K562 (cell line): ENCODE measurements at regions of chr10 and their contacts with region 1.

Region 1: GRCh38 chr10:14507176-14507575 is 176.5 kb upstream of the FRMD4A start:
- DNase-seq: no peak
- ATAC-seq: no peak
- H3K4me3 ChIP-seq: no peak overlapping the region
- H3K27ac ChIP-seq: no peak overlapping the region
- H3K4me1 ChIP-seq: no peaks in the 10 kb centered on the region
- H3K27me3 ChIP-seq: peaks cover 2 to 15% of the 10 kb centered on the region in 2 experiments; a peak in 2 of 5 replicates
- CTCF ChIP-seq: no peak
- EP300 ChIP-seq: no peak
- POLR2A ChIP-seq: no peak
- RAD21 ChIP-seq: no peak

Region 2: GRCh38 chr10:14959276-14960057 is 452.3 kb after region 1 on chr10 and contains the start of gene MEIG1:
- CTCF ChIA-PET with region 1: no interaction called
- POLR2A ChIA-PET with region 1: no interaction called
- in situ Hi-C with region 1: loop called (anchors 10 kb)
- intact Hi-C with region 1: no loop called
- DNase-seq: peak; percentile 91 to 98 (median 98)
- ATAC-seq: peak; percentile 97
- H3K4me3 ChIP-seq: peak within 1 kb of the TSS; percentile 77
- H3K27ac ChIP-seq: peak within 1 kb of the TSS; percentile 84
- H3K4me1 ChIP-seq: peaks cover 8 to 15% of the 10 kb centered on the region in 2 experiments
- H3K27me3 ChIP-seq: no peaks in the 10 kb centered on the region
- CTCF ChIP-seq: no peak
- EP300 ChIP-seq: peak; percentile 30; the same call in 1 of the 2 replicates
- POLR2A ChIP-seq: peak; percentile 61; the same call in 1 of the 2 replicates
- RAD21 ChIP-seq: no peak
- polyA plus RNA-seq, gene MEIG1: 0.50 to 0.77 TPM